Endothelial cell of umbilical vein (primary cell): ENCODE measurements at regions of chr19 and their contacts with region 1.

Region 1: GRCh38 chr19:54481322-54481930 is 8.3 kb upstream of the CDC42EP5 start:
- DNase-seq: peak; percentile 62
- H3K4me3 ChIP-seq: no peak overlapping the region
- H3K27ac ChIP-seq: no peak overlapping the region
- H3K4me1 ChIP-seq: no peaks in the 10 kb centered on the region
- H3K27me3 ChIP-seq: no peaks in the 10 kb centered on the region
- CTCF ChIP-seq: peak; percentile 68 to 79
- POLR2A ChIP-seq: no peak

Region 2: DNA sequence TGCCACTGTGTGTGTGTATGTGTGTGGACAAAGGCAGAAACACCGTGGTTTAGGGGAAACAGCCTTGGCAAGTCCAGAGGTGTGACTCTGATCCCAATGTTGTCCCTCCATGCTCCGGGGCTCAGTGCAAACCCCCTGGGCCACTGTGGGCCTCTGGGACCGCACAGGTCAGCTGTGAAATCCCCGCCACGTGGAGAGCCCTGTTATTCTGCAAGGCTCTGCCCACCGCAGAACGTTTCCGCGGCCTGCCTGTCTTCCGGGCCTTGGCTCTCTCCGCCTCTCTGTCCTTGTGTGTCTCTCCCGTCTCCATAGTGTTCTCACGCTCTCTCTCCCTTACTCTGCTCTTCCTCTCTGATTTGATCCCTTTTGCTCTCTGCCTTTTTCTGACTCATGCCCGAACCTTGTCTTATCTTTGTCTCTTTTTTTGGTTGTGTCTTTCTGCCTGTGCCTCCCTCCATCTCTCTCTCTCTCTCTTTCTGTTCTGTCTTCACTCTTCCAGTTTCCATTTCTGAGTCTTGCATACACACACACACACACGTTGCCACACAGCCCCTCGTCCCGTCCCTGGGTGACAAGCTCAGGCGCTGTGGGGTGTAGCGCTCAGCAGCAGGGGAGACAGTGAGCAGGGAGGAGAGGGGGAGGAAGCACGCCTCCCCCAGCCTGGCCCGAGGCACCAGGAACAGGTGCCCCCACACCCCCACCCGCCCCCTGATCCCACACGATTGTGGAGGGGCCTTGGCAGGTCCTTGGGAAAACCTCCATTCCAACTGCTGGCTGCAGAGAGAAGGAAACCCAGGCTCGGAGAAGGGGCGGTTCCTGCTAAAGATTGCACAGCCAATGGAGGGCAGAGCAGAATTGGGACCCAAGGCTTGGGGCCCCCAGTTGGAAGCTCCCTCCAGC is 63.1 kb before region 1 on chr19:
- CTCF ChIA-PET with region 1: no interaction called
- POLR2A ChIA-PET with region 1: no interaction called
- dilution Hi-C with region 1: no loop called
- intact Hi-C with region 1: no loop called
- DNase-seq: no peak
- H3K4me3 ChIP-seq: no peak overlapping the region
- H3K27ac ChIP-seq: no peak overlapping the region
- H3K4me1 ChIP-seq: no peaks in the 10 kb centered on the region
- H3K27me3 ChIP-seq: peaks cover 36 to 47% of the 10 kb centered on the region in 2 experiments
- CTCF ChIP-seq: no peak
- POLR2A ChIP-seq: no peak

Region 3: GRCh38 chr19:54502518-54503048 is 21.2 kb after region 1 on chr19 and contains the start of gene LAIR2:
- CTCF ChIA-PET with region 1: no interaction called
- POLR2A ChIA-PET with region 1: no interaction called
- dilution Hi-C with region 1: no loop called
- intact Hi-C with region 1: no loop called
- DNase-seq: no peak
- H3K4me3 ChIP-seq: no peak within 1 kb of the TSS
- H3K27ac ChIP-seq: no peak within 1 kb of the TSS
- H3K4me1 ChIP-seq: no peaks in the 10 kb centered on the region
- H3K27me3 ChIP-seq: no peaks in the 10 kb centered on the region
- CTCF ChIP-seq: no peak
- POLR2A ChIP-seq: no peak
- total RNA-seq, gene LAIR2: not detected in 2 replicates

Region 4: DNA sequence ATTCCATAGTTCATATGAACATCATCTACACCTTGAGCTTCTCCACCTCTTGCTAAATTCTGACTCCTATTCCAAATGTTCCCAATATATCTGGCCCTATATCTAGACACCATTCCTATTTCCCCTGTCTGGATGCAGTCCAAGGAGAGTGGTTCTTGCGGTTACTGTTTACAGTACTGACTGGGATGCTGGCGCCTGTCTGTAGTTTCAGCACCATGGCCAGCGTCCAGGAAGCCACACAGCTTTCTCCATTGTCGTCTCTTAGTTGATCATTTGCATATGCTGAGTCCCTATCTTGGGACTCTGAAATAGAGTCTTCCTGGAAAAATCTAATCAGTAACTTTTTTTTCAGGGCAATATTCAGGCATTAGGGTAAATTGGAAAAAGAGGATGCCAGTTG is 36.1 kb after region 1 on chr19:
- CTCF ChIA-PET with region 1: no interaction called
- POLR2A ChIA-PET with region 1: no interaction called
- dilution Hi-C with region 1: no loop called
- intact Hi-C with region 1: no loop called
- DNase-seq: peak; percentile 52
- H3K4me3 ChIP-seq: no peak overlapping the region
- H3K27ac ChIP-seq: no peak overlapping the region
- H3K4me1 ChIP-seq: peaks cover 29% of the 10 kb centered on the region
- H3K27me3 ChIP-seq: no peaks in the 10 kb centered on the region
- CTCF ChIP-seq: no peak
- POLR2A ChIP-seq: no peak

Region 5: DNA sequence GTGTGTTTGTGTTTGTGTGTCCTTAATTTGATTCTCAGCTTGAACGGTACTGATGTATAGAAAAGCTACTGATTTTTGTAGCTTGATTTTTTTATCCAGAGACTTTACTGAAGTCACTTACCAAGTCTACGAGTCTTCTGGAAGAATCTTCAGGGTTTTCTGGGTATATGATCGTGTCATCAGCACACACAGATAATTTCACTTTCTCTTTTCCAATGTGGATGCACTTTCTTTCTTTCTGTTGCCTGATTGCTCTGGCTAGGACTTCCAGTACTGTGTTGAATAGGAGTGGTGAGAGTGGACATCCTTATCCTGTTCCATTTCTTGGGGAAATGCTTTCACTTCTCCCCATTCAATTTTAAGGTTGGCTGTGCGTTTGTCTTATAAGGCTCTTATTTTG is 141.0 kb after region 1 on chr19:
- CTCF ChIA-PET with region 1: no interaction called
- POLR2A ChIA-PET with region 1: no interaction called
- dilution Hi-C with region 1: no loop called
- intact Hi-C with region 1: no loop called
- DNase-seq: no peak
- H3K4me3 ChIP-seq: no peak overlapping the region
- H3K27ac ChIP-seq: no peak overlapping the region
- H3K4me1 ChIP-seq: no peaks in the 10 kb centered on the region
- H3K27me3 ChIP-seq: no peaks in the 10 kb centered on the region
- CTCF ChIP-seq: no peak
- POLR2A ChIP-seq: no peak

Region 6: GRCh38 chr19:54653181-54653809 is 171.9 kb after region 1 on chr19:
- CTCF ChIA-PET with region 1: no interaction called
- POLR2A ChIA-PET with region 1: no interaction called
- dilution Hi-C with region 1: no loop called
- intact Hi-C with region 1: loop called (anchors 1 kb)
- DNase-seq: peak; percentile 22
- H3K4me3 ChIP-seq: no peak overlapping the region
- H3K27ac ChIP-seq: no peak overlapping the region
- H3K4me1 ChIP-seq: no peaks in the 10 kb centered on the region
- H3K27me3 ChIP-seq: no peaks in the 10 kb centered on the region
- CTCF ChIP-seq: peak; percentile 29 to 31
- POLR2A ChIP-seq: no peak

Region 7: DNA sequence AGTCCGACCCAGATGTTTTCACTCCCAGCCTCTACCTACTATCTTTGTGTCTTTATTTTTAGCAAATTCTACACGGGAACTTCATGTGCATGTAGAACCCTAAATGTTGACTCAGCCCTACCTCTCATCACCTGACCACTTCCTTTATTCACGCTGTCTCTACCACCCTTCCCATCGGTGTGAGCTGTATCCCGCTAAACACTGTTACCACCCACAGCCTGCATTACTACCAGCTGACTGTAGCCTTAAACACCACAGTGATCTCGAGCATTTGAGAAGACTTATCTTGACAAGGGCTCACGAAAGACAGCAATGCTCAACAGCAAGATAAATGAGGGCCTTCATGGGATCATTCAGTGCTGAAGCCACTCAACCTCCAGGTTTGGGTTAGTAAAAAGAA is 439.7 kb after region 1 on chr19:
- CTCF ChIA-PET with region 1: interaction called, 3 read pairs
- POLR2A ChIA-PET with region 1: no interaction called
- dilution Hi-C with region 1: no loop called
- intact Hi-C with region 1: loop called (anchors 2 kb)
- DNase-seq: no peak
- H3K4me3 ChIP-seq: no peak overlapping the region
- H3K27ac ChIP-seq: no peak overlapping the region
- H3K4me1 ChIP-seq: no peaks in the 10 kb centered on the region
- H3K27me3 ChIP-seq: no peaks in the 10 kb centered on the region
- CTCF ChIP-seq: no peak
- POLR2A ChIP-seq: no peak

Region 8: DNA sequence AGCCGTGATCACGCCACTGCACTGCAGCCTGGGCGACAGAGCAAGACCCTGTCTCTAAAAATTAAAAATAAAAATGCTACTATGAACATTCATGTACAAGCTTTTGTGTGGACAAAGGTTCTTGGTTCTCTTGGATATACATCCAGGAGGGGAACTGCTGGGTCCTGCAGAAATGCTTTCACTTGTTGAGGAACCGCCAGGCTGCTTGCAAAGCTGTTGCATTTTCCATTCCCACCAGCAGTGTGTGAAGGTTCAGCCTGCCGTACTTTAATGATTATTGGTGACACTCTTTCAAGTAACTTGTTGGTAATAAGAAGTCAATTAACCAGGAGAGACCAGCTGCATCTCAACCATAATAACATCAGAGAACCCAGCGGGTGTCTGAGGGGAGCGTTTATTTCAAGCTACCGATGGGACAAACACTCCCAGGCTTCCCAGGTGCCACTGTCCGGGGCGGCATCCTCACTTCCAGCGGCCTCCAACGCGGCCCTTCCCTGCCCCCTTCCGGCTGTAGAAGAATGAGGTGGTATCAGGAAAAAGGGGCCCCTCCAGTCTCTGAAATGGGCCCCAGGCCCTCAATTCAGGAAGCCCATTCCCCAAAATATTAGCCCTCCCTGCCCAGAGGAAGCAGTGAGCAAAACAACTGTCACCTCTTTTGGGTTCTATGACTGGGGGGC is 651.2 kb after region 1 on chr19:
- CTCF ChIA-PET with region 1: interaction called, 3 read pairs
- POLR2A ChIA-PET with region 1: no interaction called
- dilution Hi-C with region 1: no loop called
- intact Hi-C with region 1: loop called (anchors 1 kb)
- DNase-seq: no peak
- H3K4me3 ChIP-seq: no peak overlapping the region
- H3K27ac ChIP-seq: no peak overlapping the region
- H3K4me1 ChIP-seq: no peaks in the 10 kb centered on the region
- H3K27me3 ChIP-seq: peaks cover 0 to 4% of the 10 kb centered on the region in 2 experiments
- CTCF ChIP-seq: peak; percentile 15 to 23
- POLR2A ChIP-seq: no peak